ENCODE measurements at regions of chr11 and their contacts with region 1.

Region 1: GRCh38 chr11:111982019-111982464 is 43.2 kb upstream of the DLAT start:
- DNase-seq: peak; percentile 39 to 76
- ATAC-seq: peak; percentile 82 to 92
- H3K4me3 ChIP-seq: no peak overlapping the region
- H3K27ac ChIP-seq: peak overlapping the region; percentile 13 to 42 (median 39)
- H3K4me1 ChIP-seq: peaks cover 14 to 25% of the 10 kb centered on the region in 2 donors
- H3K27me3 ChIP-seq: no peaks in the 10 kb centered on the region
- CTCF ChIP-seq: peak; percentile 69 to 82 (median 73)
- POLR2A ChIP-seq: no peak

Region 2: DNA sequence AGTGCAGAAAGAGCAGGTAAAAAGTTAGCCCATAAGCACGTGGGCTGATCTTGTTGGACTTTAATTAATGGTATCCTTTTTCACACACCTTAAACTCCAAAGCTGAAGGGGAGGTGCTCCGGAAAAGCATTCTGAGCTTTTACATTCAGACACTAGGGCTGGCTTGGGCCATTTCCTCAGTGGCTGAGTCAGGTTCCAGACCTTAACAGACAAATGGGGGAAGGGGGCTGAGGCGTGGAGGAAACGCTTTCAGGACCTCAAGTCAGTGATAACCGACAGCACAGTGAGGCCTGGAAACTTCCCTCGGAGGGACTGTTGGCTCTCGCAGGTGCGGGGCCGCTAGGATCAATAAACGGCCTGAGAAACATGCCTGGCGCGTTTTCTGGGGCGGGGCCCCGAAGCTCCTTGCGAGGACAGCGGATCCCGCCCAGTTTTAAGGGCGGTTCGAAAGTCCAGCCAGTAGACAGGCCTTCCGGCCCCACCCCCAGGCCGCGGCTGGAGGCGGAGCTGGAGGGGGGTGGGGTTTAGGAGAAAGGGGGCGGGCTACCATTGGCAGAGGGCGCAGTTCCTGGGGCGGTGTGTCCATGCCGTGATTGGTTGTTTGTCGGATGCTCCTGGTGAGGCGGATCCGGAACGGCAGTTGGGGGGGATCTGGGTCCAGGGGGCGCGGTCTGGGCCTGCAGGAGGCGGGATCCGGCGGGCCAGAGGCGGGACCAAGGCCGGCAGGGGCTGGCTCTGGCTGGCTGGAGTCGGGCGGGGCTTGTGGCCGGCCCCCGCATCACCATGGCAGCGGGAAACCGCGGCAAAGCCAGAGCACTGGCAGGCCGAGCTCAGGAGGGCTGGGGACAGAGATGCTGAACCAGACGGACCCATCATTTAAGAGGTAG is 55.3 kb before region 1 on chr11:
- in situ Hi-C with region 1: loop called in 2 of 4 experiments (anchors 5 kb)
- intact Hi-C with region 1: loop called (anchors 1 kb)
- DNase-seq: peak; percentile 93 to 96
- ATAC-seq: peak; percentile 76 to 77
- H3K4me3 ChIP-seq: peak overlapping the region; percentile 46 to 62 (median 53)
- H3K27ac ChIP-seq: peak overlapping the region; percentile 91 to 94 (median 92)
- H3K4me1 ChIP-seq: peaks cover 51 to 55% of the 10 kb centered on the region in 2 donors
- H3K27me3 ChIP-seq: no peaks in the 10 kb centered on the region
- CTCF ChIP-seq: peak in 1 of 5 experiments; percentile 21
- POLR2A ChIP-seq: peak; percentile 78 to 87

Region 3: DNA sequence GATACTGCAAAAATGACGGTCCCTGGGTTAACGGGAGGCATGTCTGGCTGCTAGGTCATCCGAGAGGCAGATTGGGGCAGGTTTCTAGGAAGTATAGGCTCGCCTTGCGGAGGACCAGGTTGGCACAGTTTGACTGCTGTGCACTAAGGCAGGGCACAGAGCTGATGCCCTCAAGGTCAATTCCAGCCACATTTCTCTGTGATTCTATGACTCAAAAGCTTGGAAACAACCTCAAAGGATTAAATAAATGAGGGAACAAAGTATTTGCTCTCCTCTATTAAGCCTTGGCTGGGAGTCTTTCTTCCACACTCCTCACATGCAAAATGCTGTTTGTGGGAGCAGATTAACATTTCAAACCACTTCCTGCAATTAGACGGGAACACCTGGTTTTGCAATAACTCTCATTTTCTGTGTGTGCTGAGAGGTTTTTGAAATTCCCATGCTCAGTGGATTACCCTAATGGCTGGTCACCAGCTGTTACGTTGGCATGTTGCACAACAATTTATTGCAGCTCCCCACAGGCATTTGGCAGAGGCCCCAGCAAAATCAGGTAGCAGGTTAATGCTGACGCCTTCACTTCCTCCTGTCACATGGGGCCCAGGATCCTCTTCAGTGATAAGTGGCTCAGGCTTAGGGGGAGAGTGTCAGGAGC is 339.6 kb after region 1 on chr11:
- in situ Hi-C with region 1: no loop called
- intact Hi-C with region 1: no loop called
- DNase-seq: peak; percentile 22 to 53
- ATAC-seq: peak; percentile 39 to 76
- H3K4me3 ChIP-seq: no peak overlapping the region
- H3K27ac ChIP-seq: no peak overlapping the region
- H3K4me1 ChIP-seq: peaks cover 21 to 29% of the 10 kb centered on the region in 2 donors
- H3K27me3 ChIP-seq: no peaks in the 10 kb centered on the region
- CTCF ChIP-seq: no peak
- POLR2A ChIP-seq: no peak

Measured in gastrocnemius medialis (tissue), 4 donors.